ENCODE measurements at regions of chr22 and their contacts with region 1.

Region 1: DNA sequence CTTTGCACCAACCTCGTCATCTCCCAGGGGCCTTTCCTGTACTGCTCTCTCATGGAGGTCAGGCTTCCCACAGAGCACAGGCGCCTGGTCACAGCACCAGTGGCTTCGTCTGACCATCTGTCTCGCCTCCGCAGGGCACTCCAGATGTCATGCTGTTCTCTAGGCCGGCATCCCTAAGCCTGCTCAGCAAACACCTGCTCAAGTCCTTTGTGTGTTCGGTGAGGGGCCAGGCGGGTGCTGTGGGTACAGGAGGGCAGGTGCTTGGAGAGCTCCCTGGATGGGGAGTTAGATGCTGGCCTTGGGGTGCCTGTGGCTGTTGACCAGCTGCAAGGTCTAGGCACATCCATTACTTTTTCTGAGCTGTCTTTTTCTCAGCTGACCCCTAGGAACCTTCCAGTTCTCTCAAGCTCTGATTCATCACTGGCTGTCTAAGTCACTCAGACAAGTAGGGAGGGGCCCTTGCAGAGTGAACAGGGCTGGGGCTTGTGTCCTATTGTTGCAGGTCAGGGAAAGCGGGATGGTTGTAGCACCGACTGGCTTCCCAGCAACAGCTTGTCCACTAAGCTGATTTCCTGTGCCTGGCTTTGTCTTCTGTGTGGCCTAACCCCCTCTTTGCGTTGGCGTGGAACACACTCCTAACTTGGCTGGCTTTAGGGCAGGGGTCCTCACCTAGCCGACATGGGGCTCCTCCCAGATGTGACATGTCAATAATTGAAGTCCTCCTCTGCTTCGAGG is 9.2 kb downstream of the CLDN5 start:
- DNase-seq: no peak
- H3K4me3 ChIP-seq: no peak overlapping the region
- H3K27ac ChIP-seq: no peak overlapping the region
- H3K4me1 ChIP-seq: no peaks in the 10 kb centered on the region
- H3K27me3 ChIP-seq: no peaks in the 10 kb centered on the region
- CTCF ChIP-seq: no peak
- POLR2A ChIP-seq: no peak

Region 2: DNA sequence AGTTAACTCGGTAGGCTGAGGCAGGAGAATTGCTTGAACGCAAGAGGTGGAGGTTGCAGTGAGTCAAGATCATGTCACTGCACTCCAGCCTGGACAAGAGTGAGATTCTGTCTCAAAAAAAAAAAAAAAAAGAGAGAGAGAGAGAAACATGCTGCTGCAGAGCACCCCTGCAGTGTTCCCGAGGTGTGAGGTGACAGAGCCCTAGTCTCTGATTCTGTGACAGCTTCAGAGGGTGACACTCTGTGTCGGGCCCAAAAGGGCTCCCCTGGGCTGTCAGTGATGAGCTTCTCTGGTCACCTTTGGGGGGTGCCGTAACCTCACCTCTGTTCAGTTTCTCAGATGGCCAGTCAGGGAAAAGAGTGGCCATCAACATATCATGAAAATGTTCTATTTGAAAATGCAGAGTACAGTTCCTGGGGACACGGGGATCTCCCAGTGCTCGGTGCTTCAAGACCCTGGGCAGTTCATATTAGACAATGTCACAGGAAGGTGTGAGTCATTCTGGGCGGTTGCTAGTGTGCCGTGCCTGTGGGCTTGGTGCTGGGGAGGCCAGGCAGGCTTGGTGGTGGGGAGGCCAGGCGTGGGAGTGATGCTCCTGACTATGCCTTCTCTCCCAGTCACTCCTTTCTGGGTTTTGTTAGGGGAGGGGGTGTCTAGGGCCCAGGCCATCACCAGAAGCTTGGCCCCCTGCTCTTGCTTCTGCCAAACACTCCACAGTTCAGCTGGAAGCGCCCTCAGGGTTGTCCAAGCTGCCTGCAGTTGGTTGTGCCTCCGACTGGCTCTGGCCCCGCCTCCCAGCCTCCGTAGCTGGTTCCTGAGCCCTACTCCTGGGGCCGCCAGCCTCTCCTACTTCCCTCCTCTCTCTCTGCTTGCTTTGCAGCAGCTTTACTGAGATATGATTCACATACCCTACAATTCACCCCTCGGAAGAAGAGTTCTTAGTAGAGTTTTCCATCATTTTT is 61.7 kb after region 1 on chr22:
- intact Hi-C with region 1: loop called (anchors 10 kb)
- DNase-seq: peak in 1 of 2 donors; percentile 47
- H3K4me3 ChIP-seq: no peak overlapping the region
- H3K27ac ChIP-seq: peak overlapping the region; percentile 33 to 52
- H3K4me1 ChIP-seq: no peaks in the 10 kb centered on the region
- H3K27me3 ChIP-seq: no peaks in the 10 kb centered on the region
- CTCF ChIP-seq: no peak
- POLR2A ChIP-seq: peak in 1 of 2 donors; percentile 18

Measured in uterus (tissue), 4 donors.